Upper lobe of right lung (tissue), 1 donor: ENCODE measurements at regions of chr11 and their contacts with region 1.

Region 1: GRCh38 chr11:8566613-8567210 is 27.3 kb downstream of the STK33 start:
- DNase-seq: no peak
- ATAC-seq: peak; percentile 54
- H3K4me3 ChIP-seq: no peak overlapping the region
- H3K27ac ChIP-seq: no peak overlapping the region
- H3K4me1 ChIP-seq: no peaks in the 10 kb centered on the region
- H3K27me3 ChIP-seq: no peaks in the 10 kb centered on the region
- CTCF ChIP-seq: peak; percentile 73

Region 2: DNA sequence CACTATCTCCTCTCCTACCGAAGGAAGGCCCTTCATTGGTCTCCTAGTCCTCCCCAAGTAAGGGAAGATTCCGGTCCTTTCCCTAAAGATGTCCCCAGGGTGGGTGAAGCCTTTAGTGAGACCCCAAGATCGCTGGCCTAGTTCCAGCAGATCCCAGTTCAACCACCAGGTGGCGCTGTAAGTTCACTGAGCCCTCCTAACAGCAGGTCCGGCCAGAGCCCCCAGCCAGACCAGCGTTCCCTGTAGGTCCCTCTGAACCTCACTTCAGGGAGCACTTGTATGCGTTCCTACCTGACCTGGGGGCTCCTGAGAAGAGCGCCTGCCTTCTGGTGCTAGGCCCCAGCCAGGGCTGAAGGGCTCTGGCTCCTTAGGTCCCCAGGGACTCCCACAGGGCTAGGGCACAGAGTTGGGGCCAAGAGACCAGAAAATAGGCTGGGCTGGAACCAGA is 341.1 kb before region 1 on chr11:
- intact Hi-C with region 1: loop called (anchors 10 kb)
- DNase-seq: peak; percentile 80
- ATAC-seq: peak; percentile 67
- H3K4me3 ChIP-seq: no peak overlapping the region
- H3K27ac ChIP-seq: no peak overlapping the region
- H3K4me1 ChIP-seq: no peaks in the 10 kb centered on the region
- H3K27me3 ChIP-seq: no peaks in the 10 kb centered on the region
- CTCF ChIP-seq: peak; percentile 94